ENCODE measurements at regions of chr13 and their contacts with region 1.

Region 1: GRCh38 chr13:30465585-30466357 is at the start of gene HMGB1:
- DNase-seq: peak; percentile 97
- ATAC-seq: peak; percentile 97
- H3K4me3 Mint-ChIP-seq: peak within 1 kb of the TSS; percentile 83
- H3K27ac Mint-ChIP-seq: peak within 1 kb of the TSS; percentile 95
- H3K4me1 Mint-ChIP-seq: peaks cover 18% of the 10 kb centered on the region
- H3K27me3 Mint-ChIP-seq: peaks cover 3% of the 10 kb centered on the region; the same call in 1 of the 2 replicates
- CTCF ChIP-seq: no peak
- total RNA-seq, gene HMGB1: 611 to 640 TPM (median 616 TPM) in 3 replicates

Region 2: DNA sequence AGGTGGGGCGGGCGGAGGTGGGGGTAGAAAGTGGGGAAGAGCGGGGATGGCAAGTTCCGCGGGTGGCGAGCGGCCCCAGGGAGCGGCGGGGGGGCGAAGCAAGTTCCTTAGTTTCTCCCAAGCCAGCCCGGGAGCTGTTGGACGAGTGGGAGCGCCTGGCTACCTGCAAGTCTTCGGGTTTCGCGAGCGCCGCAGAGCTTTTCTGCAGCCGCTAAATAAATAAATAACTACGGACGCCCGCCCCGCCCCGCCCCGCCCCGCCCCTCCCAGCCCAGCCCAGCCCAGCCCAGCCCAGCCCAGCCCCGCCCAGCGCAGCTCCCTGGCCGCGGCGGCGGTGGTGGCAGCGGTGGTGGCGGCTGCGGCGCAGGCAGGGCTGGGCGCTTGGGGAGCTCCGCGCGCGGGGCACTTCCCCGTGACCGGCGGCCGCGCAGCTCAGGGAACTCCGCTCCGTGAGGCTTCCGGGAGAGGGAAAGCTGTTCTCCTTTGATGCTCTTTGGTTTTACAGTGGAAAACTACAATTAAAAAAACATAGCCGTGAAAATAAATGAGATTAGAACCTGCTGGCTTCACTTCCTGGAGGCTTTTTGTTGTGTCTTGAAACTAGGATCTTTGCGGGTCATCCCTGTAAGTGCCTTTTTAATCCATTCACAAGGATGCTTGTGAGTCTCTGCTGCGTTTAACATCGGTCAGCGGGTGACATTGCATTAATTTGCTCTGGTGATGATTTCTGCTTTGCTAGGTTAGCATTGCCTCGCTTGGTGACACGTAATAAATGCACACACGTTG is 43.5 kb before region 1 on chr13 and contains the start of gene UBE2L5:
- CTCF ChIA-PET with region 1: no interaction called
- POLR2A ChIA-PET with region 1: interaction called, 13 read pairs
- DNase-seq: no peak
- ATAC-seq: peak; percentile 89
- H3K4me3 Mint-ChIP-seq: peak within 1 kb of the TSS; percentile 82
- H3K27ac Mint-ChIP-seq: peak within 1 kb of the TSS; percentile 91
- H3K4me1 Mint-ChIP-seq: peaks cover 16% of the 10 kb centered on the region
- H3K27me3 Mint-ChIP-seq: peaks cover 18% of the 10 kb centered on the region
- CTCF ChIP-seq: no peak
- total RNA-seq, gene UBE2L5: 0.13 TPM in 1 of 3 replicates, not detected in the others

Measured in WTC11 (cell line).